Psoas muscle (tissue), 8 donors: ENCODE measurements at regions of chr4 and their contacts with region 1.

Region 1: GRCh38 chr4:169270810-169271691 is at the start of gene SH3RF1:
- DNase-seq: peak; percentile 91 to 94
- ATAC-seq: peak; percentile 94 to 96 (median 95)
- H3K4me3 ChIP-seq: peak within 1 kb of the TSS; percentile 98
- H3K27ac ChIP-seq: peak within 1 kb of the TSS; percentile 96
- H3K4me1 ChIP-seq: peaks cover 33% of the 10 kb centered on the region
- H3K27me3 ChIP-seq: no peaks in the 10 kb centered on the region
- CTCF ChIP-seq: peak; percentile 44
- total RNA-seq, gene SH3RF1: 19.2 to 35.9 (median 27.0) TPM

Region 2: GRCh38 chr4:168710353-168710946 is 560.6 kb before region 1 on chr4:
- intact Hi-C with region 1: loop called in 1 of 2 experiments (anchors 5 kb)
- DNase-seq: no peak
- ATAC-seq: peak; percentile 58 to 89 (median 69)
- H3K4me3 ChIP-seq: no peak overlapping the region
- H3K27ac ChIP-seq: peak overlapping the region; percentile 38
- H3K4me1 ChIP-seq: peaks cover 18% of the 10 kb centered on the region
- H3K27me3 ChIP-seq: no peaks in the 10 kb centered on the region
- CTCF ChIP-seq: peak; percentile 71

Region 3: DNA sequence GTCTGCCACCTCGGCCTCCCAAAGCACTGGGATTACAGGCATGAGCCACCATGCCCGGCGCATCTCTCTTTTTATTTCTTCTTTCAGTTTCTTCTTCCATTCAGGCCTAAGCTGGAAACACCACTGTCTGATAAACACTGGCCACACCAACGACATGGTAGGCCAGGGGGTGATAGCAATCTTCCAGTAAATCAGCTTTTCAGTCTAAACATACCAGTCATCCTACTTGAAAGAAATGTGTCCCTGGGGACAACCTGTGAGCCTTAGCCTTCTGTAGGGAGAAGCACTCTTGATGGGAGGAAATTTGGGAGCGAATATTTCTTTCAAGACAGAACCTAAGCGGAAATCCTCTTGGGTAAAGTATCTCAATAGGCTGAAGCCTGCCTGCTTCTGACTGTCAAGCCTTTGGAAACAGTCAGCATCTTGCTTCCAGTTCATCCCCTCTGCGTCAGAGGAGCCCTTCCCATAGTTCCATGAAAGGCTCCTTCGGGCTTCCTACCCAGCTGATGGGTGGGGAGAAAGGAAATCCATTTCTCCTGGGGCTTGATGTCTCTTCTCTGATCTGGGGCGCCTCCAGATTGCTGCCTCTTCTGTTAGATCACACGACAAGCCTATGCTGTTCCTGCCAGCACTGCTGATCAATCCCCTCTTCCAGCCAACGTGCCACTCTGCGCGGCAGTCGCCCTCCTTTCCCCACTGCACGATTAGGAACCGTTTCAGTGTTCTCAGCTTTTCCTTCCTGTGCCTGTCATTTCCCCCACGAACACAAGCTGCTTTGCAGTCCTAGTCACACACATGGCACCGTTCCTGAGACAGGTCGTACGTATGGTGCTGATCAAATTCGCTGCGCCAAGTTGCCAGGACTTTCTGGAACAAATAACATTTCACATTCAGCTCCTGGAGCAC is 211.5 kb before region 1 on chr4:
- intact Hi-C with region 1: loop called in 1 of 2 experiments (anchors 2 kb)
- DNase-seq: peak; percentile 37 to 74
- ATAC-seq: peak; percentile 57 to 82 (median 69)
- H3K4me3 ChIP-seq: peak overlapping the region; percentile 50
- H3K27ac ChIP-seq: peak overlapping the region; percentile 80
- H3K4me1 ChIP-seq: peaks cover 30% of the 10 kb centered on the region
- H3K27me3 ChIP-seq: no peaks in the 10 kb centered on the region
- CTCF ChIP-seq: no peak

Region 4: DNA sequence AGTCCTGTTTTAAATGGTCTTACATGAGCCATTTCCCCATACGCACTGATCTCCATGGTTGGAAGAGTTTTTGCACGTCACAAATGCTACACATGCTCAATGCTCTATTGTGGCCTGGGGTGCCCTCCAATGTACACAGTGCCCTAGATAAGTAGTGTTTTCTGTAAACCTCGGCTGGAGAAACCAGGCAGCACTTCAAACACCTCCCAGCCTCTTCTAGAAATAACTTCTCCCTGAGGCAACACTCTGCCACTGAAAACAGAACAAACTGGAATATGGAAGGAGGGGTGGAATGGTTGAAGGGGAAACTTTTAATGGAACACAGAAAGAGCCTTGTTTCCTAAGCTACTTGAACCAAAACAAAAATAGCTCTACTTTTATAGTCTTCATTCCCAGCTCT is 137.1 kb before region 1 on chr4:
- intact Hi-C with region 1: loop called in 1 of 2 experiments (anchors 5 kb)
- DNase-seq: no peak
- ATAC-seq: no peak
- H3K4me3 ChIP-seq: no peak overlapping the region
- H3K27ac ChIP-seq: no peak overlapping the region
- H3K4me1 ChIP-seq: peaks cover 22% of the 10 kb centered on the region
- H3K27me3 ChIP-seq: no peaks in the 10 kb centered on the region
- CTCF ChIP-seq: no peak

Region 5: DNA sequence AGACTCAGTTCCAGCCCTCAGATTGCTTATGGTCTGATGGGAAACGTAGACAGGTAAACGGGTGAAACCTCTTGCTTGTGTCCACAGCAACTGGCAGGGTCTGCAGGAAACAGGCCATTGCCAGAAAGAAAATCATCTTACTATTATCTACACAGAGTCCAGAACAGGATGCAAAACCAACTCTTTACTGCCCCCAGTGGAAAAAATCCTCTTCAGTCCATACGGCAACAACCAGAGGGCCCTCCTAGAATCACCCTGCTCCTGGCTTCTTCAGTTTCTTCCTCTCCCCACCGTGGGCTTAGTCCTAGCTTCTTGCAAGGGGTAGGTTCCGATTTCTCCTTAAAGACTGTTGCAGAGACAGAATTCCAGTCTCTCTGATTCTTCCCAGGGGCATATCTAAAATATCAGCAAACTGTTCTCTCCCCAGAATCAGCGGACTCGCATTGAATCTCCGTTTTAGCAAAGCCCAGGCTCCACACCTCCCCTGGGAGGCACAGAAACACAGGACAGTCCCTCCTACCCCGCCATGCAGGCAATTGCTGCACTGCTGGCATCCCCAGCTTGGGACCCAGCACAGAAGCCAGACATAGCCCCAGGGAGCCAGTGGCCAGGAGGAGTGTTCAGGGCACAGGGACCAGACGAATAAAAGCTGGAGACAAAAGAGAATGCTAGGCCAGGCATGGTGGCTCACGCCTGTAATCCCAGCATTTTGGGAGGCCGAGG is 40.8 kb after region 1 on chr4:
- intact Hi-C with region 1: loop called in 1 of 2 experiments (anchors 5 kb)
- DNase-seq: no peak
- ATAC-seq: peak; percentile 54 to 76 (median 70)
- H3K4me3 ChIP-seq: no peak overlapping the region
- H3K27ac ChIP-seq: no peak overlapping the region
- H3K4me1 ChIP-seq: peaks cover 21% of the 10 kb centered on the region
- H3K27me3 ChIP-seq: no peaks in the 10 kb centered on the region
- CTCF ChIP-seq: peak; percentile 58

Region 6: GRCh38 chr4:169485791-169486742 is 215.0 kb after region 1 on chr4:
- intact Hi-C with region 1: loop called in 1 of 2 experiments (anchors 5 kb)
- DNase-seq: no peak
- ATAC-seq: peak in 2 of 4 donors; percentile 49 to 85
- H3K4me3 ChIP-seq: no peak overlapping the region
- H3K27ac ChIP-seq: no peak overlapping the region
- H3K4me1 ChIP-seq: no peaks in the 10 kb centered on the region
- H3K27me3 ChIP-seq: no peaks in the 10 kb centered on the region
- CTCF ChIP-seq: peak; percentile 61